GM13977 (cell line): ENCODE measurements at regions of chr11 and their contacts with region 1.

Region 1: GRCh38 chr11:59810189-59810910 is at the start of gene MRPL16:
- DNase-seq: peak; percentile 85
- CTCF ChIP-seq: peak; percentile 20

Region 2: GRCh38 chr11:59355226-59355625 is 455.1 kb before region 1 on chr11:
- in situ Hi-C with region 1: no loop called
- DNase-seq: no peak
- CTCF ChIP-seq: no peak

Region 3: DNA sequence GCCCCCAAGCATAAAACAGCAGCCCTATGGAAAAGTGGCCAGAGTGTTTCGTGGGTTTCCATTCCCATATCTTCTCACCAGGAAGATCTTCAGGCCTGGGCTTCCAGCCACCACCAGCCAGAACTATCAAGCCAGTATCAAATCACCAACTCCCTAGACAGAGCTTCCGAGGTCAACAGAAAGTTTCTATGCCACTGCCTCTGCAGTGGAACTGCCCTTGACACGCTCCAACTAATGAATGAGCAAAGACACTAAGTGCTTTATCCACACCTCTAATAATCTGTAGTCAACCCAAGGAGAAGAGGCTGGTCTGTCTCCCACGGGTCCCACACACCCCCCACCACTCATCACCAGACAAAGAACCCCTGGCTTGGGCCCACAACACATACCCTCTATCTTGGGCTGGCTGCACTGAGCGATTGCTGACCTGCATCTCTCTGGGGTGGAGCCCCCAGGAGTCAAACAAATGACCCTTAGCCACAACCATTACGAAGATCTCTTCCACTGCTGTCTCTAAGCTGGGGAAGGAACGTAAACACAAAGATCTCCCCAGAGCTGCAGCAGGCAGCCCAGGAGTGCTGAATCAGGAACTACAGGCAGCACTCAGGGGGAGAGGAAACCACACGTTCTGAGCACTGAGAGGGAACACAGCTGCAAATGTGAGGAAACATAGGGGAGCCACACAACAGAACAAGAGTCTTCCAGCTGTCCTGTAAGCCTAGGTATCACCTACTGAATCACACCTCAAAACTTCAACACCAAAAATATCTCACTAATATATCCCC is 441.9 kb before region 1 on chr11:
- in situ Hi-C with region 1: no loop called
- DNase-seq: no peak
- CTCF ChIP-seq: no peak

Region 4: DNA sequence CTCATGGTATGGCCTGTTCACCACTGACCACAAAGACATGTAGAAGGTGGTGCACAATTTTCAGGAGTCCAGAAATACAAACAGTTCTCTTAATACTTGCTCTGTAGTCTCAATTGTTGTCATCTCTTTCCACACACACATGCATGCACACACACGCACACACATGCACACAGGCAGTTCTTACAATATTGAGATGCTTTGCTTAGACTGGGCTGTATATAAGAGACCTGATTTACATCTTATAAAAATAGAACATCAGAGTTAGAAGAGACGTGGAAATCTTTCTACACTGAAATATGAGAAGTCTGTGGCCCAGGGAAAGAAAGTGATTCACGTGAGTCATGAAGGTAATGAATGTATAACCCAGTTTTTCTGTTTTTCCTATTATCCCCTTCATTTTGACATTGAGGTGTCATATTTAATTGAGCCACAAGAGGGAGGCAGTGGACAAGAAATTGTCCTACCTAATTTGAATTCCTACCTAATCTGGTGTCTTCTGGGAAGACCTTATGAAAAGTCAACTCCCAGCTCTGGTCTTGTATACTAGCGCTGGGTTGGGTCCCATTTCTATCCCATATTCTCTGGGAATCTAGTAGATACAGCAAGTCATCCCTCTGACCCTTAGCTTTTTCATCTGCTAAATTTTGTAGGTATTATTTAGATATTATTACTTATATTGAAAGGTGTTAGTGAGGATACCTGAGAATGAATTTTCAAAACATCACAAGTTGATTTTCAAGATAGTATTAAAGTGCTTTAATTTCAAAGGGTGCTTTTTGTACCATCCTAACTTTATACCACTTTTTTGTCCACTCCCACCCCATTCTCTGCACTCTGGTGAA is 455.2 kb after region 1 on chr11:
- in situ Hi-C with region 1: no loop called
- DNase-seq: peak; percentile 23
- CTCF ChIP-seq: peak; percentile 71

Region 5: DNA sequence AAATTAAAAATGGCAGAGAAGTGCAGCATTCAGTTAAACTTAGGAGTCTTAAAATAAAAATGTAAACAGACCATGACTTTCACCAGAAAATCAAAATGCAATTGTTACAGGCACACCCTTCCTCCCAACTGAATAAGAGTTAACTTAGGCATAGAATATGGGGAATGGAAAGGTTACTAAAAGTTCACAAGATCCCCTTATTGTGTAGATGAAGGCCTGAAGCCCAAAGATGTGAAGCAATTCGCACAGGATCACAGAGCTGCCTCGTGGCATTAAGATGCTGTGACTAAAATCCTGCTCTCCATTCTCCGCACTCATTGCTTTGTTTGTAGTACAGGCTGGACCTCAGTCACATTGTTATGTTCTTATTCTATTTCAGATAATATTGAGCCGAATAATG is 623.0 kb after region 1 on chr11:
- in situ Hi-C with region 1: no loop called
- DNase-seq: no peak
- CTCF ChIP-seq: no peak

Region 6: DNA sequence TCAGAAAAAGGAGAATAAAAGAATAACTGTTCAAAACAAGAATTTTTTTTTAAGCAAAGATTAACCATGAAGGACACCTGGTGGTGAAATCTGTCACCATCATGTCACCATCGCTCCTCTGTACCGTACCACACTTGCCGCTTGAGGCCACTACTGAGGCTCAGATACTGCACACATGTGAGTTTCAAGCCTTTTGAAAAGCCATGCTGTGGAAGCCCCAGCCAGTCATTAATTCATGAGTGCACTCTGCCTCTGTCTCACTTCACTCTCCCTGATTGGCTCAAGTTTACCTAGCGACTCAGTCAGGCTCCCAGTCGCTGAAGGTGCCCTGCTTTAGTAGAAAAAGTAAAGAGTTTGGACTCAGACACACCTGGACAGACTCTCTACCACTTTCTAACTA is 675.6 kb after region 1 on chr11:
- in situ Hi-C with region 1: loop called (anchors 25 kb)
- DNase-seq: peak; percentile 88
- CTCF ChIP-seq: peak; percentile 95